ENCODE measurements at regions of chr7 and their contacts with region 1.

Region 1: DNA sequence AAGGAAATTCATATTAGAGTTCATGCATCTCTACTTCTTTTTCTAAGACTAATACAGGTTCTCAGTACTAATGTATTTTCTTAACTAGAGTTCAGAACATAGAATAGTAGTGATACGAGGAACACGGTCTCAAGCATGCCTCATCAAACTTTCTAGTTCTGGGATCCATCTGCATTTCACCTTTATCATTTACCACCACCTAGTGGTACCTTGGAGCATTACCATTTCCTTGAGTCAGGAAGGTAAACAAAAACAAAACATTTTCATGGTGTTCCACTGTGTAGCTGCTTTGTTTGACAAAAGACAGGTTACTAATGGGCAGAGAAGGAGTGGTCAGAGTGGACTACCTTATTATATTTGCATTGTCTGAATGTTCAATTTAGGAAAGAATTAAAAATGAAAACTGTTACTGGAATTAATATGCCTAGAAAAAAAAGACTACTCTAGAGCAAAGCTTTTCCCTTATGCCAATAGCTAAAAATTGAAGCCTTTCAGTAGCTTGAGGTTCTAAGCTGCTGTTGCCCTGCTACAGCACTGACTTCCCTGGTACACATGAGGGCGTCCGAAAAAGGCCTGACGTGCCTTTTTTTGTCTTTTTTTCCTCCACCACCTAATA is 44.5 kb downstream of the STARD3NL start:
- DNase-seq: no peak
- H3K4me3 ChIP-seq: no peak overlapping the region
- H3K27ac ChIP-seq: no peak overlapping the region
- H3K4me1 ChIP-seq: peaks cover 10% of the 10 kb centered on the region
- H3K27me3 ChIP-seq: no peaks in the 10 kb centered on the region
- CTCF ChIP-seq: peak; percentile 93

Region 2: GRCh38 chr7:37901236-37901827 is 321.3 kb before region 1 on chr7:
- intact Hi-C with region 1: loop called (anchors 5 kb)
- DNase-seq: no peak
- H3K4me3 ChIP-seq: no peak overlapping the region
- H3K27ac ChIP-seq: no peak overlapping the region
- H3K4me1 ChIP-seq: peaks cover 12% of the 10 kb centered on the region
- H3K27me3 ChIP-seq: peaks cover 5% of the 10 kb centered on the region
- CTCF ChIP-seq: peak; percentile 66

Region 3: DNA sequence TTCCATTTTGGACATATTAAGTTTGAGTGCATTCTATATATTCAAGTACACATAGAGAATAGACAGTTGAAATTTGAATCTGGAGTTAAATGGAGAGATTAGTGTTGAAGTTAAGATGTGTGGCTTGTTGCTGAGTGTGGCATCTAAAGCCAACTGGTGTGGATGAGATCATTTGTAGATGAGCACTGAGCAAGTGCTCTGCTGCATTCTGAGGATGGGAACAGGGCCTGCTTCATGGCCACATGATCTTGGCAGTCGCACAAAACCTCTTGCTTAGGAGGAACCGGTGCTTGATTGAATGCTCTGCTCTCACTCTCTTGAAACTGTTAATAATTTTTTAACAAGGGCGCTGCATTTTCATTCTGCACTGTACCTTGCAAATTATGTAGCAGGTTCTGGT is 240.2 kb before region 1 on chr7:
- intact Hi-C with region 1: no loop called
- DNase-seq: no peak
- H3K4me3 ChIP-seq: no peak overlapping the region
- H3K27ac ChIP-seq: no peak overlapping the region
- H3K4me1 ChIP-seq: no peaks in the 10 kb centered on the region
- H3K27me3 ChIP-seq: no peaks in the 10 kb centered on the region
- CTCF ChIP-seq: no peak

Region 4: DNA sequence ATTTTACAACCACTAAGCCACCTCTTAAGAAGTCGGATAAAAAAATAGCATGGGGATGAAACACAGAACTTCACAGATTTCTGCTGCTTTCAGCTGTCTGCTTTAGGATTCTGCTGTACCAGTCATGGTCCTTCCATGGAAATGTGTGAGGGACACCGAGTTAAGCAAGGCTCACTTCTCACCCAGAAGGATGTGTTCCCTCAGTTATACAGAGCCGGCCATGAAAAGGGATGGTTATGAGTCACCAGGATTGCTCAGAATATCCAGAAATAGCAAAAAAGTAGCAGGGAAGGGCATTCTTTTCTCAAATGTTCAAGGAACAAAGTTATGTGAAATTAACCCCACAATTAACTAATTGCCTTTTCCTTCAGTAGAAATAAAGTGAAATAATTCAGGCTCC is 284.2 kb after region 1 on chr7:
- intact Hi-C with region 1: no loop called
- DNase-seq: no peak
- H3K4me3 ChIP-seq: no peak overlapping the region
- H3K27ac ChIP-seq: no peak overlapping the region
- H3K4me1 ChIP-seq: no peaks in the 10 kb centered on the region
- H3K27me3 ChIP-seq: no peaks in the 10 kb centered on the region
- CTCF ChIP-seq: no peak